ENCODE measurements at regions of chr6 and their contacts with region 1.

Region 1: GRCh38 chr6:722077-722524 is 29.2 kb upstream of the EXOC2 start:
- DNase-seq: peak; percentile 71 to 82 (median 79)
- H3K4me3 ChIP-seq: peak overlapping the region in 1 of 7 experiments; percentile 31
- H3K27ac ChIP-seq: no peak overlapping the region
- H3K4me1 ChIP-seq: peaks cover 0 to 10% (median 5%) of the 10 kb centered on the region in 4 experiments
- H3K27me3 ChIP-seq: peaks cover 0 to 10% (median 4%) of the 10 kb centered on the region in 5 experiments

Region 2: GRCh38 chr6:1242446-1242845 is 520.3 kb after region 1 on chr6:
- CTCF ChIA-PET with region 1: no interaction called
- POLR2A ChIA-PET with region 1: no interaction called
- DNase-seq: no peak
- H3K4me3 ChIP-seq: no peak overlapping the region
- H3K27ac ChIP-seq: no peak overlapping the region
- H3K4me1 ChIP-seq: no peaks in the 10 kb centered on the region
- H3K27me3 ChIP-seq: peaks cover 0 to 38% (median 4%) of the 10 kb centered on the region in 5 experiments

Region 3: DNA sequence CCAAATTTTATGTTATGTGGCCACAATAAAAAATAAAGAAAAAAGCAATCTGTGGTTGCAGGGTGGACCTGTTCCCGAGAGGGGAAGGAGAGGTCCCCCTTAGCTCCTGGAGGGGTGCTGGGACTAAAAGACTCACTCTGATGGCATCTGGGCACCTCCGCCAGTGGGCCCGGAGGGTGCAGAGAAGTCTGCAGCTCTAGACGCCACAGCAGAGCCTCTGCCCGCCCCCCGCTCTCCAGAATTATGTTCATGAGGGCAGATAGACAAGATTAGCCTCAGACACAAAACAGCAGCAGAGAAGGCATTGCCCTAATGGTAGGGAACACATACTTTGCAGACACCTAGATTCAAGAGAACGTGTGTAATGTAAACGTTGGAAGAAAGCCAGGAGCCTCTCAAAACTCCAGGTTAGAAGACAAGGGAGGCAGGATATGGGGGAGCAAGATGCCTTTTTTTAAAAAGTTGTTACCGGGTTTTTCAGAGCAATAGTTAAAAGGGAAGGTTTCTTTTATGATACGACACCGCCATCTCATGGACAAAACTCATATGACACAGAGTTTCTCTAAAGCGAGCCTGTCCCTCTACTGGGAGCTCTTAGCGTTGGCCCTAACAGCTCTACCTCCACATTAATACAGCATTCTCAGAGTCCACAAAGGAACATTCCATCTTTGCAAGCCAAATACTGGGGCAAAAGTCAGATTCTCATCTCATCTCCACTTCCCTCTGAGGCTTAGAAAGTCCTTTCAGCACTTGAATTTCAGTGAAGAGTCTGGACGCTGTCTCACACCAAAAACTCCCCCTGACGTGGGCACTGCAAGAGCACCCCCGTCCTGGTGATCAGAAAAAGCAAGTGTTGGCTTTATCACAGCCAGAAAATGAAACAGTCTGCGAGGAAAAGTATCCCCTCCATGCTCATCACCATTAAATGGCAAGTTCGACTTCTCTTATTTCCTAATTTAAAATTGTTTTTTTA is 714.5 kb after region 1 on chr6:
- CTCF ChIA-PET with region 1: interaction called, 11 read pairs
- POLR2A ChIA-PET with region 1: no interaction called
- DNase-seq: peak; percentile 68 to 85 (median 81)
- H3K4me3 ChIP-seq: no peak overlapping the region
- H3K27ac ChIP-seq: no peak overlapping the region
- H3K4me1 ChIP-seq: no peaks in the 10 kb centered on the region
- H3K27me3 ChIP-seq: peaks cover 2 to 51% (median 16%) of the 10 kb centered on the region in 5 experiments

Measured in common myeloid progenitor, CD34-positive (primary cell).